OCI-LY7 (cell line): ENCODE measurements at regions of chr10 and their contacts with region 1.

Region 1: GRCh38 chr10:119769886-119770285 is 44.0 kb downstream of the INPP5F start:
- DNase-seq: no peak
- H3K4me3 ChIP-seq: no peak overlapping the region
- H3K27ac ChIP-seq: no peak overlapping the region
- H3K4me1 ChIP-seq: no peaks in the 10 kb centered on the region
- CTCF ChIP-seq: no peak

Region 2: GRCh38 chr10:119803264-119803663 is 33.4 kb after region 1 on chr10:
- CTCF ChIA-PET with region 1: no interaction called
- POLR2A ChIA-PET with region 1: no interaction called
- intact Hi-C with region 1: loop called (anchors 5 kb)
- DNase-seq: no peak
- H3K4me3 ChIP-seq: no peak overlapping the region
- H3K27ac ChIP-seq: no peak overlapping the region
- H3K4me1 ChIP-seq: no peaks in the 10 kb centered on the region
- CTCF ChIP-seq: no peak

Region 3: GRCh38 chr10:119919826-119920225 is 149.9 kb after region 1 on chr10:
- CTCF ChIA-PET with region 1: no interaction called
- POLR2A ChIA-PET with region 1: no interaction called
- intact Hi-C with region 1: no loop called
- DNase-seq: no peak
- H3K4me3 ChIP-seq: no peak overlapping the region
- H3K27ac ChIP-seq: no peak overlapping the region
- H3K4me1 ChIP-seq: peaks cover 5% of the 10 kb centered on the region
- CTCF ChIP-seq: no peak